Activated CD4-positive, alpha-beta memory T cell treated with anti-CD3 and anti-CD28 coated beads for 36 hours (primary cell): ENCODE measurements at regions of chr6 and their contacts with region 1.

Region 1: DNA sequence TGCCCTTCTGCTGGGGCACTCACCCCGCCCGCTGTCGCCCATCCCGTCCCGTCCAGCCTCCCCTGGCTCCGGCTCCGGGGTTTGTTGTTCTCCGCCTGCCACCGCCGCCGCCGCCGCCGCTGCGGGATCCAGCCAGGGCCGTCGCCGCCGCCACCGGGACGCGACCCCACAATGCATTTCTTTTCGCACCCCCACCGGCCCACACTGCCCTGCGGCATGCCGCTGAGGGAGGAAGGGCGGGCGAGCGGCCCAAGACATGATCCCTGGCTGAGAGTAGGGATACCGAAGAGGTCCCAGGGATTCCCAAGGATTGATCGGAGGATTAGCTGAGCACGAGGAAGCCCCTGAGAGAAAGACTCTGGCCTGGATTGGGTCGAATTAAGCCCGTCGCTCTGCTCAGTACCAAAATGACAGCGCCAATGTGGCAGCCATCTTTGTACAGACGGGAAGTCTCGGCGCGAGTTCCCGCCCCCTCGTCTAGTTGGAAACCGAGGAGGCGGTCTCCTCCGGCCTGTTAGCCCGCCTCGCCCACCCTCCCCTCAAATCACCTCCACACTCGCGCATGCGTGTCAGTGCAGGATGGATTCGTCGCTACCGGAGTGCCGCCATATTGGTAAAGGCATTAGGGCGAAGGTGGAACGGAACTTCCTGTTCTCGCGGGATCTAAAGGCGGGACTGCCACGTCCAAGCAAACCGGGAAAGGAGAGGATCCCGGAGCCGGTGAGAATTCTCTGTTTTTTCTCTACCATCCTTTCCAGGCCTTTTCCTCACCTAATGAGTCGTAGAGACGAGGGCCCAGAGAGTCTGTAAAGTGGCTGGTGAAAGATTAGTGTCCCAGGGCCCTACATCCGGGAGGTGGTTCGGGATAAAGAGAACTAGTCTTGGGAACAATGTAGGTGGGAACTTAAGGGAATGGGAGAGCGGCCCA is at the starts of genes RXRB and SLC39A7:
- DNase-seq: peak; percentile 100
- H3K4me3 Mint-ChIP-seq: peak within 1 kb of the TSS; percentile 94
- H3K27ac Mint-ChIP-seq: peak within 1 kb of the TSS; percentile 96
- H3K4me1 Mint-ChIP-seq: peaks cover 60% of the 10 kb centered on the region
- H3K27me3 Mint-ChIP-seq: no peaks in the 10 kb centered on the region
- total RNA-seq, gene RXRB: 40.9 to 41.4 TPM
- total RNA-seq, gene SLC39A7: 42.0 to 45.7 TPM

Region 2: DNA sequence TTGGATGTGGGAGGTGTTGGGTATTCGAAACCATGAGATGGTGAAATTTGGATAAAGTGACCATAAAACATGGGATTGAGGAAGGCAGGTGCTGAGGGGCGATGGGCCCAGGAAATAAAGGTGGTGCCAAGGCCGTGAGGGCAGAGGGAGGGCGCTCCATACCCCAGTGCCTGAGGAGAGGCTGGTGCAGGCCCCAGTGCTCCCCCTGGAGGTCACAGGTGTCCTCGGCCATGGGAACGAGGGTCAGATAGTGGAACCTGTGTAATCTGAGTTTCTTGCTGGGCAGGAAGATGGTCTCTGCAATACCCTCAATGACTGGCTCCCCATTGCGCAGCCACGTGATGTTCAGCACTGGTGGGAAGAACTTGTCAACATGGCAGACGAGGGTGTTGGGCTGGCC is 108.5 kb before region 1 on chr6:
- CTCF ChIA-PET with region 1: no interaction called
- POLR2A ChIA-PET with region 1: no interaction called
- intact Hi-C with region 1: no loop called
- DNase-seq: peak; percentile 71
- H3K4me3 Mint-ChIP-seq: no peak overlapping the region
- H3K27ac Mint-ChIP-seq: no peak overlapping the region
- H3K4me1 Mint-ChIP-seq: no peaks in the 10 kb centered on the region
- H3K27me3 Mint-ChIP-seq: peaks cover 13% of the 10 kb centered on the region

Region 3: DNA sequence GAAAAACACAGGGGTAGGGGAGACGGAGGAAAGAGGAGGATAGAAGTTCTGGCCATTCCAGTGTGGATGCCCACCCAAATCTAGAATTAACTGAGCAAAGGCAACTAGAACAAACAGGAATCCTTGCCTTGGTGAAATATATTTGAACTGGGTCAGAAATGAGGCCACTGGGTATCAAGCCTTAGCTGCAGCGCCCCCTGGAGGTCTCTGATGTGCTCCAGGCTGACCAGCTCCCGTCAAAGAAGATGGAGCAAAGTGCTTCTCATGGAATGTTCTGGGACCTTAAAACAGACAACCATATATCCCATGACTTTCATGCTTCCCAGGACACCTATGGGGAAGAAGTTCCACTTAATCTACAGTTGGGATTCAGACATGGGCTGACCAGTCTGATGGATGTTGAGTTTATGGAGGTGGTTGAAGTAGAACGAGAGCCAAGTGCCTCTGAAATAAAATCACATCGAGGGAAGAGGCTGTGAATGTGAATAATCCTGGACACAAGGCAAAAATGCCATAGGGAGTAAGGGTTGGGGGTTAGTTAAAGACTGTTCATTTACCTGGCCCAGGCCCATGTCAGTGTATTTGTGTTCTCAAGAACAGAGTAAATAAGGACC is 74.3 kb before region 1 on chr6:
- CTCF ChIA-PET with region 1: interaction called, 10 read pairs
- POLR2A ChIA-PET with region 1: no interaction called
- intact Hi-C with region 1: no loop called
- DNase-seq: peak; percentile 75
- H3K4me3 Mint-ChIP-seq: no peak overlapping the region
- H3K27ac Mint-ChIP-seq: no peak overlapping the region
- H3K4me1 Mint-ChIP-seq: no peaks in the 10 kb centered on the region
- H3K27me3 Mint-ChIP-seq: peaks cover 26% of the 10 kb centered on the region

Region 4: DNA sequence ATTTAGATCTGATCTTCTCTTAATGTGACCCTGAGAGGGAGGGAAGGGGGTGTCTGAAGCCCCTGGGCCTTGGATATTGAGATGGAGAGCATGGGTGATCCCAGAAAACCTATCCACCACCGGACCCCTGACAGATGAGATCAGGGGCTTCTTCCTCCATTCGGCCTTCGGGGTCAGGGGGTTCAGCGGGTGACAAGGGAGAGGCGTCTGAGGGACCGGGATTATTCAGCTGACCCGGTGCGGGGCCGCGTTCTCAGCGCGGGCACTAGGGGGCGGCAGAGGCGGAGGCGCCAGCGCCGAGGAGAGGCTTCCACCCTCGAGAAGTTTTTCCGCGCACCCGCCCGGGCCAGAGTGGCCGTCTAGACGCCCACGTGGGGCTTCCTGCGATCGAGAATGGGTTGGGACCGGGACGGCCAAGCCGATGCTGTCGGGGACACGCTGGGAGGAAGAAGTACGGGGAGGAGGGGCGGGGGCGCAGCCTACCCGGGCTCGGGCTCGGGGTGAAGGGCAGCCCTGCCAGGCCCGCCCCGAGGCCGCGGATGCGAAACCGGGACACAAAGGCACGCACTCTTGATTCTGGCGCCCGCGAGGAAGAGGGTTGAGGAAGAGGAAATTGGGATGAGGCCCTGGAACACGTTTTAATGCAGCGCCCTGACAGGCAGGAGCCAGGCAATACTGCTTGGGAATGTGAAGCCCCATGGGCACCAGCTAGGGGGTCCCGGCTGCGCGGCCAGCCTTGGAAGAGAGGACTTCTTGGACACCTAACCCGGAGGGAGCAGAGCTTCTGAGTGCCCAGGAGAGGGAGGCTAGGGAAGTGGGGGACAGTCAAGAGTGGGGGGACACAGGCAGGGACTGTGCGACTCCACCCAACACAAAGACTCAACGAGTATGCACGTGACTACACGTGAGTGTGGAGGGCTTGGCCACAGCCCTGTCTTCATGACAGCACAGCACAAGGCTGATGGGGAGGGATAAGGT is 38.8 kb before region 1 on chr6:
- CTCF ChIA-PET with region 1: interaction called, 23 read pairs
- POLR2A ChIA-PET with region 1: no interaction called
- intact Hi-C with region 1: loop called (anchors 1 kb)
- DNase-seq: peak; percentile 88
- H3K4me3 Mint-ChIP-seq: peak overlapping the region; percentile 76
- H3K27ac Mint-ChIP-seq: no peak overlapping the region
- H3K4me1 Mint-ChIP-seq: peaks cover 13% of the 10 kb centered on the region
- H3K27me3 Mint-ChIP-seq: peaks cover 6% of the 10 kb centered on the region

Region 5: GRCh38 chr6:33248925-33249731 is 48.6 kb after region 1 on chr6:
- CTCF ChIA-PET with region 1: interaction called, 16 read pairs
- POLR2A ChIA-PET with region 1: interaction called, 9 read pairs
- intact Hi-C with region 1: loop called (anchors 1 kb)
- DNase-seq: peak; percentile 99
- H3K4me3 Mint-ChIP-seq: peak overlapping the region; percentile 88
- H3K27ac Mint-ChIP-seq: peak overlapping the region; percentile 90
- H3K4me1 Mint-ChIP-seq: peaks cover 43% of the 10 kb centered on the region
- H3K27me3 Mint-ChIP-seq: peaks cover 3% of the 10 kb centered on the region

Region 6: GRCh38 chr6:33299237-33299944 is 98.9 kb after region 1 on chr6:
- CTCF ChIA-PET with region 1: interaction called, 3 read pairs
- POLR2A ChIA-PET with region 1: interaction called, 3 read pairs
- intact Hi-C with region 1: loop called (anchors 1 kb)
- DNase-seq: peak; percentile 96
- H3K4me3 Mint-ChIP-seq: peak overlapping the region; percentile 89
- H3K27ac Mint-ChIP-seq: peak overlapping the region; percentile 96
- H3K4me1 Mint-ChIP-seq: peaks cover 30% of the 10 kb centered on the region
- H3K27me3 Mint-ChIP-seq: no peaks in the 10 kb centered on the region

Region 7: DNA sequence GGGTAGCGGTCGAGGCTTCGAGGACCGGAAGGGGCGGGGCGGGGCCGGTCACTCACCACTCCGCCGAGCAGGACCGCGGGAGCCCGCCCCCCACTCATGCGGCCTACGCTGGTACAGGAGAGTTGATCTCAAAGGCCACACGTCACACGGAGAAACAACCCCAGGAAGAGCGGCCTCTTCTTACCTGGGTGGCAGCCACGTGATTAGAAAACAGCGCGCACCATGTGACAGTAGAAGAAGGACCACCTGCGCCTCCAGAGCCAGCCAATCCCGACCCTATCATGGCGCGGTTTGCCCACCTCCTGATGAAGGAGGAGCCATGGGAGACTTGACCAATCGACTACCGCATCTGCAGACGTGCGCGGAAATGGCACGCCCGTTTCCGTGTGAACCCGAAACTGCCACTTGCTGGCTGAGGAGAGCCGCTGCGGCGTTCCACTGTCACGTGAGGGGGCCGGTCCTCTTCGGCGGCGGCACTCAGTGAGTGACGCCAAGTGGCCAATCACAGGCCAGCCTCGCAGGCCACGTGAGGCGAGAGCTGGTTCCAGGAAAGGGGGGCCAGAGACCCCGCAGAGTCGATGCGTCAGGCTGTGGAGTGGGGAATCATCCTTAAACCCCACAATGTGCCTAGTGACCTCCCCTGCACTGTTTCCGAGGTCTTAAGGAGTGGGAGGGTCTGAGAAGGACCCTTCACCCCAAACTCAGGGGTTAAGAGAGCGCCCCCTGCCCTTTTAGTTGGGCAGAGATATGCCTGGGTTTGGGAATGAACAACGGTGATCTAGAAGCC is 217.6 kb after region 1 on chr6 and contains the start of gene CUTA:
- CTCF ChIA-PET with region 1: no interaction called
- POLR2A ChIA-PET with region 1: no interaction called
- intact Hi-C with region 1: loop called (anchors 2 kb)
- DNase-seq: peak; percentile 100
- H3K4me3 Mint-ChIP-seq: peak within 1 kb of the TSS; percentile 94
- H3K27ac Mint-ChIP-seq: peak within 1 kb of the TSS; percentile 99
- H3K4me1 Mint-ChIP-seq: peaks cover 56% of the 10 kb centered on the region
- H3K27me3 Mint-ChIP-seq: no peaks in the 10 kb centered on the region
- total RNA-seq, gene CUTA: 190 to 198 TPM